CD4-positive, alpha-beta memory T cell (primary cell): ENCODE measurements at regions of chr11 and their contacts with region 1.

Region 1: DNA sequence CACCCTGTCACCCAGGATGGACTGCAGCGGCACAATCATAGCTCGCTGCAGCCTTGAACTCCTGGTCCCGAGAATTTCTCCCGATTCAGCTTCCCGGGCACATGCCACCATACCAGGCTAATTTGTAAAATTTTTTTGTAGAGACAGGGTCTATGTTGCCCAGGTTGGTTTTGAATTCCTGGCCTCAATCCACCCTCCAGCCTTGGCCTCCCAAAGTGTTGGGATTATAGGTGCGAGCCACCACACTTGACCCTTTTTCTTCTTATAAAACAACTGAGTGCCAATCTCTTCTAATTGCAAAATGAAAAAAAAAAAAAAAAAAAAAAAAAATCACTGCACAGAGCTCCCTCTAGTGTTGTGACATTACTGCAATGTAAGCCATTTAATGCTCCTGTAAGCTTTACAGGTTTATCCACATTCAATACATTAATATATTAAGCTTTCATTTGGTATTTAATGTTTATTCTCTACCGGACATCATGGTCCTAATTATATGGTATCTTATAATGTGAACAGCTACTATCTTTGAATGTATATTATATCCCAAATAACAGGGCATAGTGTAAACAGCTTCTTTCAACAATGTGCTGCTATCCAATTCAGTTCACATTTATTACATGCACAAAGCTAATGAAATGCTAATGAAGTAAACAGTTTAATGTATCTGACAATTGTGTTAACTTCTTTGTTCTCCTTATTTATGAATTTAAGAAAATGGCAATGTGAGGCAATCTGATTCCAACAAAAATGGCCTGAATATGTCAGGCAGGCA is 44.6 kb downstream of the COPB1 start:
- DNase-seq: peak in 4 of 5 donors; percentile 14 to 29 (median 18)
- H3K4me3 ChIP-seq: no peak overlapping the region
- H3K4me3 Mint-ChIP-seq: no peak overlapping the region
- H3K27ac ChIP-seq: no peak overlapping the region
- H3K27ac Mint-ChIP-seq: peak overlapping the region in 4 of 7 donors; percentile 22 to 63 (median 41)
- H3K4me1 ChIP-seq: no peaks in the 10 kb centered on the region
- H3K4me1 Mint-ChIP-seq: peaks cover 0 to 3% (median 1%) of the 10 kb centered on the region in 4 donors
- H3K27me3 ChIP-seq: no peaks in the 10 kb centered on the region
- H3K27me3 Mint-ChIP-seq: no peaks in the 10 kb centered on the region

Region 2: GRCh38 chr11:13955971-13956421 is 499.1 kb before region 1 on chr11:
- CTCF ChIA-PET with region 1: interaction called, 10 read pairs
- POLR2A ChIA-PET with region 1: no interaction called
- intact Hi-C with region 1: no loop called
- DNase-seq: peak; percentile 54 to 65 (median 57)
- H3K4me3 ChIP-seq: no peak overlapping the region
- H3K4me3 Mint-ChIP-seq: no peak overlapping the region
- H3K27ac ChIP-seq: no peak overlapping the region
- H3K27ac Mint-ChIP-seq: no peak overlapping the region
- H3K4me1 ChIP-seq: peaks cover 11% of the 10 kb centered on the region
- H3K4me1 Mint-ChIP-seq: peaks cover 0 to 3% (median 1%) of the 10 kb centered on the region in 4 donors
- H3K27me3 ChIP-seq: peaks cover 3% of the 10 kb centered on the region
- H3K27me3 Mint-ChIP-seq: peaks cover 8 to 11% of the 10 kb centered on the region in 2 donors

Region 3: DNA sequence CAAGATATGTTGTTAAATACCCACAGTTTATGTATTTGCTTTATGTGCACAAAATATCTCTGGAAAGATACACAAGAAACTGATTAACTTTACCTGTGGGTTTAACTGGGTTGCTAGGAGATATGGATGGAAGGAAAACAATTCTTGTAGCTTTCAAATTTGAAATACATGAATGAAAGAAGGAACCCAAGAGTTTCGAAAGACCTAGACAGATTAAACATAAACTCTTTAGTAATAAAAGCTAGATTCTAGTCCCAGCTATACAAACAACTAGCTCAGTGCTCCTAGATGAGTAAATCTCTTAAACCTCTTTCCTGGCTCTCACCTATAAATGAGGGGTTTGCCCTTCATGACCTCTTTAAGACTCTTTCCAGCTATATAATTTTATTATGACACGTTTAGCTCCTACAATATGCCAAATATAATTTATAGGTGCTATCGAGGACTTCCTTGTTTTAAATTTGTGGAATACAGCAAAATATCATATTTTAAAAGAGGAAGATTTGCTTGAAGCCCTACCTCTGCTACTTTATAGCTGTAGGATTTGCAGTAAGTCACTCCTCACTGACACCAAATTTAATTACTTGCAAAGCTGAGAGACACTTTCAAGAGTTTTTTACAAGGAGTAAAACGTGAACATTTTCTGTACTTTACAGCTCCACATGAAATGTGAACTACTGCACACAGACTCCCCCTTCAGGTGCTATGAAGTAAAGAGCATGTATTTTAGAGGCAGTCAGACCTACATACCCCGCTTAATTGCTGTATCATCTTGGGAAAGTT is 146.7 kb before region 1 on chr11:
- CTCF ChIA-PET with region 1: interaction called, 172 read pairs
- POLR2A ChIA-PET with region 1: no interaction called
- intact Hi-C with region 1: loop called (anchors 2 kb)
- DNase-seq: peak in 4 of 5 donors; percentile 20 to 29 (median 24)
- H3K4me3 ChIP-seq: no peak overlapping the region
- H3K4me3 Mint-ChIP-seq: no peak overlapping the region
- H3K27ac ChIP-seq: no peak overlapping the region
- H3K27ac Mint-ChIP-seq: no peak overlapping the region
- H3K4me1 ChIP-seq: peaks cover 23% of the 10 kb centered on the region
- H3K4me1 Mint-ChIP-seq: peaks cover 7 to 12% (median 10%) of the 10 kb centered on the region in 4 donors
- H3K27me3 ChIP-seq: no peaks in the 10 kb centered on the region
- H3K27me3 Mint-ChIP-seq: no peaks in the 10 kb centered on the region

Region 4: DNA sequence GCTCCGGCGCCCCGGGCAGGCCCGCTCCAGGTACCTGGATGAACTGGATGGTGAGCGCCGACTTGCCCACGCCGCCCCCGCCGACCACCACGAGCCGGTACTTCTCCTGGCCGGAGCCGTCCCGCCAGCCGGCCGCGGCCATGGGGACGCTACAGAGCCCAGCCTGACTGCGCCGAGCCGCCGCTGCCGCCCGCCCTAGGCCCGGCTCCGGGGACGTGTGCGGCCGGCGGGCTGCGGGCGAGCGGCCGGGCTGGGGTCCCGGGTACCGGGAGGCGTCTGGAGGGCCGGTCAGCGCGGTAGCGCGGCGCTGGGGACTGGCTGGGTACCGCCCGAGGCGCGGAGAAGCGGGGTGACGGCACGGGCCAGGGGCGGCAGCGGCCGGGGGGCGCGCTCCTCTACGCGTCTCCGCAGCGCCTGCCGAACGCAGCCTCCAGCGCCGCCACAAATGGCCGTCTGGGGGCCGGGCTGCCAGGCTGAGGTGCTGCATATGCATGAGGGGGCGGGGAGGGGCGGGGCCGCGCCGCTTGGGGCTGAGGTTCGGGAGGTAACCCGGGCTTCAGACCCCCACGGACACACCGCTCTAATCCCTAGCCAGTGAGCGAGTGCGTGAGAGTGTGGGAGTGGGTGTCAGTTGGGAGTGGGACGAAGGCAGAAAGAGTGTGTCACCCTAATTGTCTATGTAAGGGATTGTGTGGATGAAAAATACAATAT is 96.2 kb before region 1 on chr11 and contains the start of gene RRAS2:
- CTCF ChIA-PET with region 1: interaction called, 5 read pairs
- POLR2A ChIA-PET with region 1: no interaction called
- intact Hi-C with region 1: loop called (anchors 2 kb)
- DNase-seq: peak; percentile 70 to 79 (median 78)
- H3K4me3 ChIP-seq: peak within 1 kb of the TSS; percentile 52 to 66
- H3K4me3 Mint-ChIP-seq: peak within 1 kb of the TSS; percentile 91 to 99 (median 97)
- H3K27ac ChIP-seq: peak within 1 kb of the TSS; percentile 44
- H3K27ac Mint-ChIP-seq: peak within 1 kb of the TSS; percentile 79 to 98 (median 91)
- H3K4me1 ChIP-seq: peaks cover 16% of the 10 kb centered on the region
- H3K4me1 Mint-ChIP-seq: peaks cover 24 to 37% (median 30%) of the 10 kb centered on the region in 4 donors
- H3K27me3 ChIP-seq: no peaks in the 10 kb centered on the region
- H3K27me3 Mint-ChIP-seq: no peaks in the 10 kb centered on the region
- total RNA-seq, gene RRAS2: 11.4 to 11.8 TPM

Region 5: DNA sequence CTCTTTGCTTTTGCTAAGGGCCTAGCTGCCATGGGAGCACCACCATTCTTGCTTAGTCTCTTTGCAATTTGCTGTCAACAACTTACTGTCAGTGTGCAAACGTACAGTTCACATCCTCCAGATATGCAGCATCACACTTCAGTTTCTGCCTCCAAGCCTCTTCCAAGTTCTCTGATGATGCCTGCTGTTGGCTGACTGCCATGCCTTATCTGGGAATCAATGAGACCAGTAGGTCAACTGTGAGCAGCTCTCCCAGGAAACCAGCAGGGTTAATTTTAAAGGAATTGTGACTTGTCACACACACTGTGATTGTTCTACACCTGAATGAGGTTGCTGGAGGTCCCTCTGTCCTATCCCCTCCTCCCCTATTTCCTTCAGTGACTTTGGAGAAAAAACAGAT is 11.4 kb before region 1 on chr11:
- CTCF ChIA-PET with region 1: interaction called, 14 read pairs
- POLR2A ChIA-PET with region 1: no interaction called
- intact Hi-C with region 1: no loop called
- DNase-seq: no peak
- H3K4me3 ChIP-seq: no peak overlapping the region
- H3K4me3 Mint-ChIP-seq: no peak overlapping the region
- H3K27ac ChIP-seq: no peak overlapping the region
- H3K27ac Mint-ChIP-seq: no peak overlapping the region
- H3K4me1 ChIP-seq: peaks cover 24% of the 10 kb centered on the region
- H3K4me1 Mint-ChIP-seq: peaks cover 8 to 35% (median 20%) of the 10 kb centered on the region in 4 donors
- H3K27me3 ChIP-seq: no peaks in the 10 kb centered on the region
- H3K27me3 Mint-ChIP-seq: no peaks in the 10 kb centered on the region